Tibial artery (tissue), 4 donors: ENCODE measurements at regions of chr6 and their contacts with region 1.

Region 1: DNA sequence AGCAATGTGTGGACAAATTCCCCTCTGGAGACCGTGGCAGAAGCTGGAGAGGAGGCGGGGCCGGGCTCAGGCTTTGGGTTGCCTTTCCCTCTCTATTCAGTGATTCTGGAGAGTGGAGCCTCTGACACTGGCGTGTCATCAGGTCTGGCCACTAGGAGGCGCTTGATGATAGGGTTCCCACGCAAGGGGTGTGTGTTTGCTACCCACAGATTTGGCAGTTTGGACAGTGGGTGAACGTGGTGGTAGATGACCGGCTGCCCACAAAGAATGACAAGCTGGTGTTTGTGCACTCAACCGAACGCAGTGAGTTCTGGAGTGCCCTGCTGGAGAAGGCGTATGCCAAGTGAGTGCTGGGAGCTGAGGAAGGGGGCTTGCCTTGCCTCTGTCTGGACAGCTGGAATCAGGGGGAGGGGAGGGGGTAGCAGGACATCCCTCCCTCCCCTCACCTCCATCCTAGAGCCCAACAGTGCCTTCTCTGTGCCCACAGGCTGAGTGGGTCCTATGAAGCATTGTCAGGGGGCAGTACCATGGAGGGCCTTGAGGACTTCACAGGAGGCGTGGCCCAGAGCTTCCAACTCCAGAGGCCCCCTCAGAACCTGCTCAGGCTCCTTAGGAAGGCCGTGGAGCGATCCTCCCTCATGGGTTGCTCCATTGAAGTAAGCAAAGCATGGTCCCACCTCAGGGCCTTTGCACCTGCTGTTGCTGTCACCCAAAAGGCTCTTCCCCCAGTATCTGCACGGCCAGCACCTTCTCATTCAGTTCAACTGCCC is 14.3 kb downstream of the CAPN11 start:
- DNase-seq: peak; percentile 88 to 92
- H3K4me3 ChIP-seq: no peak overlapping the region
- H3K27ac ChIP-seq: no peak overlapping the region
- H3K4me1 ChIP-seq: peaks cover 0 to 17% (median 6%) of the 10 kb centered on the region in 4 donors
- H3K27me3 ChIP-seq: no peaks in the 10 kb centered on the region
- CTCF ChIP-seq: peak; percentile 84 to 95

Region 2: GRCh38 chr6:44146651-44147050 is 26.3 kb before region 1 on chr6:
- intact Hi-C with region 1: no loop called
- DNase-seq: no peak
- H3K4me3 ChIP-seq: no peak overlapping the region
- H3K27ac ChIP-seq: no peak overlapping the region
- H3K4me1 ChIP-seq: peaks cover 0 to 3% (median 2%) of the 10 kb centered on the region in 4 donors
- H3K27me3 ChIP-seq: no peaks in the 10 kb centered on the region
- CTCF ChIP-seq: no peak

Region 3: DNA sequence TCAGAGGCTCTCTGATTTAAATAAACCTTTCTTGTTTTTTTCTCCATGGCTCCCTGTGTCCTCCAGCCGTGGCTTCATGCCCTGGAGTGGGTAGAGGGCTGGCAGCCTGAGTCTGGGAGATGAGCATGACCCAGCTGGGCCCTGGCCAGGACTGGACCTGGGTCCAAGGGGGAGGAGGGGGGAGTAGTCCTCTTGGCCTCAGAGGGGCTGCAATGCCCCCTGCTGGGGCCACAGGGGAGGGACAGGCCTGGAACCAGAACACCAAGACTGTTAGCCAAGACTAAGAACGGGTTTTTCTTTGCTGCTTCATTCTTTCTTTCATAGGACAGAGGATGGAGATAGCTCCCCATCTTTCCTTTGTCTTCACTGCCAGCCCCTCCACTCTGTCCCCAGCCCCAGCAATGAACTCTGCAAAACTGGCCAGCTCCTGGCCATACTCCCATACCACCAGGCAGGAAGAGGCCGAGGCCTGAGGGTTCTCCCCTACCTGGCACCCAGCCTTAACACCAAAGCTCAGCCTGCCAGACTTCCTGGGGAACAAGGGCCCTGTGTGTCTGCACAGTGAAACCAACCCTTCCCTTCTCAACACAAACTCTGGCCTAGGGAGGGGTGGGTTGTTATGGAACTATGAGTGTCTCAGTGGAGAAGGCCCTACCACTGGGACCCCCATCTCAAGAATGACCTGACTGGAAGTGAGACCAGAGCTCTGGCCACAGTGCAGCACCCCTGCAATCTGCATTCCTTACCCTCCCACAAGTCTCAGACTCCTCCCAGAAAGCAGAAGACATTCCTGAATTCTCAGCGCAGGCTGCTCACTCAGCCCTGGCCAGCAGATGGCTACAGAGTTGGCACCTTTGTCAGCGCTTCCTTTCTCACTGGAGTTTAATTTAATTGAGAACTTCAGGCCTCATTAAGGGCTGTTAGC is 61.4 kb after region 1 on chr6:
- intact Hi-C with region 1: loop called (anchors 5 kb)
- DNase-seq: peak; percentile 86 to 94
- H3K4me3 ChIP-seq: no peak overlapping the region
- H3K27ac ChIP-seq: peak overlapping the region; percentile 84 to 94
- H3K4me1 ChIP-seq: peaks cover 0 to 66% (median 51%) of the 10 kb centered on the region in 4 donors
- H3K27me3 ChIP-seq: no peaks in the 10 kb centered on the region
- CTCF ChIP-seq: peak; percentile 81 to 83

Region 4: GRCh38 chr6:44257025-44257752 is 84.3 kb after region 1 on chr6 and contains the start of gene SLC35B2:
- intact Hi-C with region 1: loop called (anchors 5 kb)
- DNase-seq: peak; percentile 54 to 82
- H3K4me3 ChIP-seq: peak within 1 kb of the TSS; percentile 78 to 86
- H3K27ac ChIP-seq: peak within 1 kb of the TSS; percentile 86 to 88
- H3K4me1 ChIP-seq: peaks cover 0 to 20% (median 17%) of the 10 kb centered on the region in 4 donors
- H3K27me3 ChIP-seq: no peaks in the 10 kb centered on the region
- CTCF ChIP-seq: peak; percentile 67 to 85